Dendritic cell treated with granulocyte-macrophage colony-stimulating factor and Interleukin-4, amounts not matched to agents 40 ng/mL and 50 ng/mL, for 4 days (primary cell): ENCODE measurements at regions of chr11 and their contacts with region 1.

Region 1: DNA sequence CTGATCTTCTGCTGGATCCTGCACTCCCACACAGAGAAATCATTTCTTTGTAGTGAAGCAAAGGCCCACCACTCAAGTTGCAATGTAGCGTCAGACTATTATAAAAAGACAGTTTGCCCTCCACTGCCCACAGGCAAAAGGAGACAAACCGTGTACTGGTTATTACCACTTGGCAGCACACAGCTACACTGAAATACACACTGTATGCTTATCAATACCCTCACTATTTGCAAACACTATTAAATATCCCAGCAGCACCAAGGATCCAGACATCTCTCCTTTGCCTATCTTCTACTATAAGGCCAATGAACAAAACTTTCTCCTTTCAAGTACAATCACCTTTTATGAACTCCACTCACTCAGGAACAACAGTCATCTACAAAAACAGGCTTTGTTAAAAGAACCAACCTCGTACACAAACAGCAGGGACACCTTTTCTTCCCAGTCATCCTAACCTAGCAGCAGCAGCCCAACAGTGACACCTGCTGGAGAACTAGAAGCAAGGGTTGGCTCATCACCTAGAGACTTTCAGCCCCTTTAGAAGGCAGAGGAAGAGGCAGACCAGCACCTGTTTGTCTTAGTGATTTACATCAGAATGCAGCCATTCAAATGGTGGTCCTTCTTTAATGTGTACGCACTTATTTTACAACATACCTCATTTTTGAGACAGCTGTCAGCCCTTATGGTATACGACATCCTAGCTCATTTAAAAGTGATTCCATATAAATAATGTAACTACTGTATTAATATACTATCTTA is 56.1 kb downstream of the AMBRA1 start:
- H3K4me3 Mint-ChIP-seq: no peak overlapping the region
- H3K27ac Mint-ChIP-seq: no peak overlapping the region
- H3K4me1 Mint-ChIP-seq: peaks cover 31% of the 10 kb centered on the region
- H3K27me3 Mint-ChIP-seq: no peaks in the 10 kb centered on the region

Region 2: GRCh38 chr11:46392421-46393230 is 145.1 kb before region 1 on chr11:
- intact Hi-C with region 1: loop called (anchors 5 kb)
- H3K4me3 Mint-ChIP-seq: peak overlapping the region; percentile 92
- H3K27ac Mint-ChIP-seq: peak overlapping the region; percentile 38
- H3K4me1 Mint-ChIP-seq: peaks cover 46% of the 10 kb centered on the region
- H3K27me3 Mint-ChIP-seq: peaks cover 58% of the 10 kb centered on the region

Region 3: GRCh38 chr11:46521961-46522681 is 15.6 kb before region 1 on chr11:
- intact Hi-C with region 1: no loop called
- H3K4me3 Mint-ChIP-seq: no peak overlapping the region
- H3K27ac Mint-ChIP-seq: no peak overlapping the region
- H3K4me1 Mint-ChIP-seq: peaks cover 36% of the 10 kb centered on the region
- H3K27me3 Mint-ChIP-seq: no peaks in the 10 kb centered on the region

Region 4: GRCh38 chr11:46972343-46972742 is 434.6 kb after region 1 on chr11:
- intact Hi-C with region 1: no loop called
- H3K4me3 Mint-ChIP-seq: peak overlapping the region; percentile 68
- H3K27ac Mint-ChIP-seq: peak overlapping the region; percentile 77
- H3K4me1 Mint-ChIP-seq: peaks cover 11% of the 10 kb centered on the region
- H3K27me3 Mint-ChIP-seq: no peaks in the 10 kb centered on the region